ENCODE measurements at regions of chr1 and their contacts with region 1.

Region 1: GRCh38 chr1:14415395-14415794 is 183.1 kb upstream of the KAZN start:
- DNase-seq: peak in 1 of 42 donors; percentile 36

Region 2: DNA sequence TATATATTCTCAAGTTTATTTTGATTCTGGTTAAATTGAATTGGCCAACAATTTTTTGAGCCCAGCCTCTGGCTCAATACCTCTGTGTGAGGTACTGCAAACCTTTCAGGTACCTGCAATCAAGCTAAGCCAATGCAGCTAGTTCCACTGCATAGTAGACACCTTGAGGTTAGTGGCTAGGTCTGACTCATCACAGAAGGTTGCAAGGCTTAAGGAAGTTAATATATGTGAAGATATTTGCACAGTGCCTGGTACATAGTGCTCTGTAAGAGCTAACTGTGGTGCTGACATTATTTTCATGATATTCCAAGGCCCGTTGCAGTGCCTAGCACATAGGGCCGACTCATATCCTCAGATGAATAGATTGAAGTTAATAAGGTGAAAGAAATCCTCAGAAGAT is 147.4 kb before region 1 on chr1:
- intact Hi-C with region 1: loop called (anchors 10 kb)
- DNase-seq: no peak

Region 3: DNA sequence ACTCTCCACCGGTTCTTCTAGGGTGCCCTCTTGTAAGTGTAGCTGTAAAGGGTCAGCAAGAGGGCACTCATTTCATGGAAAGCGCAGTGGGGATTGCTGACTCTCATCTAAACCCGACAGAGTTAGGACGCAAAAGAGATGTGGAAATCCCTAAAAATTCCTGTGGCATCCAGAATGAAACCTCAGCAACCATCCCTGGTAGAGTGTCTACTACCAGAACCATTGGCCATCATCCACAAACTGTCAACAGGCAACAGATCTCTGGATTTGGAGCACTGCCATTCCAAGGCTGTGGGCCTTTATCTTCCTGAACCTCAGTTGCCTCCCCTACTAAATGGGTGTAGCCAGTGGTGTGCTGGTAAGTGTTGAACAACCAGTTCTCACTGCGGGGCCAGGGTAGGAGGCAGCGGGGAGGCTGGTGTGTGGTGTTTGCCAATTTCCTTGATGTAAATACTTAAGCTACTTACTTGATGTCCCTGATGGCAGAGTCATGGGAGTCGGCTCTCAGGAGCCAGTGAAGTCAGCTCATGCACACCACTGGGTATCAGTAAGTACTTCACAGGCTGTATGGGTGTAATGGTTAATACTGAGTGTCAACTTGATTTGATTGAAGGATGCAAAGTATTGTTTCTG is 378.9 kb after region 1 on chr1:
- intact Hi-C with region 1: no loop called
- DNase-seq: no peak